Head of caudate nucleus (tissue), 42 donors: ENCODE measurements at regions of chr1 and their contacts with region 1.

Region 1: GRCh38 chr1:44594871-44595746 is 79.2 kb downstream of the TMEM53 start:
- DNase-seq: peak; percentile 68 to 97 (median 88)

Region 2: DNA sequence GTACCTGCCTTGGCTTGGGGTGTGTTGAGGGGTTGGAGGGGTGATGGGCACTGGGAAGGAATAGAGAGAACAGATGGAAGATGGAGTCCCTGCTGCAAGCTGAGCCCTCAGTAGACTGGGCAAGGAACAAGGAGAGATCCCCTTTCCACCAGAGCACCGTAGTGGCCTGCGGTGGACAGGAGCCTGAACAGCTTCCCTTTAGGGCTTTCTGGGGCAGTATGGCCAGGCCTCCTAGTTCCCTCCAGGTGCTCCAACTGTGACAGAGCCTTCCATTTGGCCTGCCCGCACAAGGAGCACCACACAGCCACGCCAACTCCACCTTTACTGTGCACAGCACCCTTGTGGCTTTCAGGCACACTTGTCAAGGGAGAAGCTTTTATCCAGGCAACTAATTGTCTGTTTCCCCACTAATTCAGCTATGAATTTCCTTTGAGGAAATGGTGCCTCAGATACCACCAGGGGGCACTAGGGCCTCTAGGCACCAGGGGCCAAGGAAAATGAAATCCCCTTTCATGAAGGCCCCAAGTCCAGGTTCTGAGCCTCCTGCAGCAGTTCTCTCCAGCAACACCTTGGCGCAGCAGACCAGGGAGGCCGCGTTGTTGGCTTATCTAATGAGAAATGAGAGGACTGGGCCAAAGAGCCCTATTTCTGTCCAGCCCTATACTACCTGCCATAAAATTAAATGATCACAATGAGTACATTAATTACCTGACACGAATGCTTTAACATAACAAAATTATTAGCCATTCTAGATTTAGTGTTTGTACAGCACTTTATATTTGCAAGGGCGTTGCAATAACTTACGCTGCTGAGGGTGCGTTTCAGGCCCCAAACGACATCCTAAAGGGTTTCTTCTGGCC is 217.0 kb before region 1 on chr1:
- intact Hi-C with region 1: loop called (anchors 10 kb)
- DNase-seq: peak in 40 of 42 donors; percentile 18 to 92 (median 70)

Region 3: GRCh38 chr1:44500181-44501046 is 94.7 kb before region 1 on chr1:
- intact Hi-C with region 1: loop called (anchors 2 kb)
- DNase-seq: peak in 39 of 42 donors; percentile 30 to 89 (median 72)

Region 4: DNA sequence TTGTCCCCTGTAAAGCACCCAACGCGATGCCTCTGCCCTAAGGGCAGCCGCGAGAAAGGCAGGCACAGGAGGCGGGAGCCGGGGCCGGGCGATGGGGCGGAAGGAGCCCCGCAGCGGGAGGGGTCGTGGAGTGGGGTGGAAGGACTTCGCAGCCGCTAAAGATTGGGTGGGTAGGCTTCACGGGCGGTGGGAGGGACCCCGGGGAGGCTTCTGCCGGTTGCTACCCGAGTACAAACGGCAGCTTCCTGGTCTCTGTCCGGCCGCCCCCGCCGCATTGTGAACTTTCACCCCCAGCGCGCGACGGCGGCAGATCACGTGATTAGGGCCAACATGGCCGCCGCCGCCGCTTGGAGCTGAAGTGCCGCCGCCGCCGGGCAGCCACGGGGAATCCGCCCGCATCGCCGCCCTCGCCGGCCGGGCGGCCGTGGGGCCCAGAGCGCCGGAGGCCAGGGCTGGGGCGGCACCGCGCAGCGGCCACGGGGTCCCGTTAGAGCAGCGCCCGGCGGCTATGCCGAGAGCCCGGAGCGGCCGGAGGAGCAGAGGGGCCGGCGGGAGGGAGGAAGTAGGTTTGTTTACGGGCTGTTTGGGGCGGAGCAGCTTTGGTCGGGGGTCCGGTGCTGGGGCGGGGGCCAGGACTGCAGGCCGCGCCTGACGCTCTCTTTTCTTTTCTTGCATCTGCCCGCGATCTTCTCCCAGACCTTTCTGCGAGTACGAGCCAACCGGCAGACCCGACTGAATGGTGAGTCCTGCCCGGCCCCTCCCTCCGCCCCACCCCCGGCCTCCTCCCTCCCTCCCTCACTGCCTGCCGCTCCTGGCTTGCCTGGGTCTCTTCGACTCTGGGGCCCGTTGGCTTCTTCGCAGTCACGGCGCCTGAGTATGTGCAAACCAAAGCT is 36.8 kb after region 1 on chr1:
- intact Hi-C with region 1: loop called (anchors 5 kb)
- DNase-seq: peak; percentile 59 to 94 (median 86)

Region 5: GRCh38 chr1:44645476-44646244 is 50.6 kb after region 1 on chr1:
- intact Hi-C with region 1: no loop called
- DNase-seq: peak; percentile 77 to 96 (median 91)